Activated naive CD4-positive, alpha-beta T cell treated with anti-CD3 and anti-CD28 coated beads, Interleukin-2, amount 10 ng/mL, durations not matched to agents 7 days and 5 days (primary cell): ENCODE measurements at regions of chr7 and their contacts with region 1.

Region 1: DNA sequence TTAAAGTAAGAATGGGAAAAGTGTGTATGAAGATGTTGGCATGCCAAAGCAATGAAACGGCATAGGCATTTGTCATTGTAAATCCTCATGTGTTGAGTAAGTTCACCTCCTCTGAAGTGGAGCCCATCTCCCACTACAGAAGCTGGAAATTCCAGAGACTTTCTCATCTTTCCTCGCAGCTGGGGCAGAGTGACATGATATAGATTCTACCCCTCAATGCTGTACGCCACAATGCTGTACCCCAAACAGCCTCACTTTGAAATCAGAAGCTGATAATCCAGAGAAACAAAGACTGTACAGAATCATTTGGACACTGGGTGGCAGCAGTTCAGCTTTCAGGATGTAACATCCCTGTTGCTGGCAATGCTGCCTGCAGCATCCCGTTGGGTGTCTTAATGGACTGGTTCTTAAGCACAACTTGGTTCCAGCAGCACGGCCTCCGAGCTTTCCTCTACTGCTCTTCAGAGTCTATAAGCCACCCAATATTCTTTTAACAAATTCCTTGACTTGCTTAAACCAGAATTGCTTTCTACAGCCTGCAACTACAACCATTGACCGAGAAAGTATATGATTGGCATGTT is 18.8 kb downstream of the ZC3HAV1L start:
- DNase-seq: peak; percentile 79
- H3K4me3 Mint-ChIP-seq: no peak overlapping the region
- H3K27ac Mint-ChIP-seq: no peak overlapping the region
- H3K4me1 Mint-ChIP-seq: peaks cover 9% of the 10 kb centered on the region
- H3K27me3 Mint-ChIP-seq: peaks cover 17% of the 10 kb centered on the region

Region 2: GRCh38 chr7:138785587-138786437 is 231.2 kb before region 1 on chr7:
- CTCF ChIA-PET with region 1: no interaction called
- DNase-seq: no peak
- H3K4me3 Mint-ChIP-seq: no peak overlapping the region
- H3K27ac Mint-ChIP-seq: no peak overlapping the region
- H3K4me1 Mint-ChIP-seq: peaks cover 4% of the 10 kb centered on the region
- H3K27me3 Mint-ChIP-seq: peaks cover 21% of the 10 kb centered on the region

Region 3: DNA sequence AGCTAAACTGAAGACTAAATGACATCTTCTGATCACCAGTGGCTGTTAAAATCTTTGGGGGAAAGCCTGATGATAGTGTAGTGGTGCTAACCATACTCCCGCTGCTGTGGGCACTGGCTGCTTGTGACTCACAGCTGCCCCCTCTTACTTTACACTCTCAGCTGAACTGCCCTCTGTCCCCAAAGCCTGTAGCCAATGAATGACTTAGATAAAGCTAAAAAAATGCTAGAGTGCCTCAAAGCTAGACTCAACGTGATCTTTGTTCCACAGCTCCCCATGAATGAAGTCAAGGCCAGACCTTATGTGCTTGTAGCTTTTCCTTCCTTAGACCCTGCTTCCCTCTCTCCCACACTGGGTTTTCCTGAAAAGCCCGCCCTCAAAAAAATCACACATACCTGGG is 12.3 kb after region 1 on chr7:
- CTCF ChIA-PET with region 1: interaction called, 12 read pairs
- DNase-seq: no peak
- H3K4me3 Mint-ChIP-seq: no peak overlapping the region
- H3K27ac Mint-ChIP-seq: peak overlapping the region; percentile 53
- H3K4me1 Mint-ChIP-seq: peaks cover 12% of the 10 kb centered on the region
- H3K27me3 Mint-ChIP-seq: no peaks in the 10 kb centered on the region

Region 4: DNA sequence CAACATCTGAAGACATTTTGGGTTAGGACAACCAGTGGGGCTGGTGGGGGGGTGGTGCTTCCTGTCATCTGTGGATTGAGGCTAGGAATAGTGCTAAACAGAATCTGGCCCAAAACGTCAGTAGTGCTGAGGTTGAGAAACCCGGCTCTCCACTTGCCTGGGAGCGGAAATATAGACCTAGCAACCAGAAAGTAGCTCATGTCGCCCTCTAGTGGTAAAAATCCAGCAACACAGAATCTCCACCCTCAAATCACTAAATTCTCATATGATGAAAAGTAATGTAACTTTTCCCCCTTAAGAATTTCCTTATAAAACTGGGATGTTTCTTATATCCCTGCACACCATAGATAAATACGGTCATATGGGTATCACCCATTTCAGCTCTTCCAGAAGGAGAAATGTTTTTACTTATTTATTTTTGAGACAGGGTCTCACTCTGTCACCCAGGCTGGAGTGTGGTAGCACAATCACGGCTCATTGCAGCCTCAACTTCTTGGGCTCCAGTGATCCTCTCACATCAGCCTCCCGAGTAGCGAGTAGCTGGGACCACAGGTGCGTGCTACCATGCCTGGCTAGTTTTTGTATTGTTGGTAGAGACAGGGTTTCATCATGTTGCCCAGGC is 58.1 kb after region 1 on chr7:
- CTCF ChIA-PET with region 1: interaction called, 14 read pairs
- DNase-seq: peak; percentile 80
- H3K4me3 Mint-ChIP-seq: peak overlapping the region; percentile 13
- H3K27ac Mint-ChIP-seq: peak overlapping the region; percentile 82
- H3K4me1 Mint-ChIP-seq: peaks cover 83% of the 10 kb centered on the region
- H3K27me3 Mint-ChIP-seq: no peaks in the 10 kb centered on the region

Region 5: DNA sequence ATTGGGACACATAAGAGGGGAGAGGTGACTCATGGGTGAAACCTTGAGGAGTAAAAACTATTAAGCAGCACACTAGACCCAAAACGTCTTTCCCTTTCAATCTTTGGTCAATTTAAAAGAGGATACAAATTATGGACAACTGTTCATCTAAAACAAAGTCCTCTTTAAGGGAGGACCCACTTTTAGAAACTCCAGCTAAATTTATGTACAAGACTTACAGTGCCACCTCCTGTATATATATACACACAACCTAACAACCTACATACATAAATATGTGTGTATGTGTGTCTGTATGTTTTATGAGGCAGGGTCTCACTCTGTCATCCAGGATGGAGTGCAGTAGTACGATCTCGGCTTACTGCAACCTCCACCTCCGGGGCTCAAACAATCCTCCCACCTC is 110.6 kb after region 1 on chr7:
- CTCF ChIA-PET with region 1: interaction called, 15 read pairs
- DNase-seq: no peak
- H3K4me3 Mint-ChIP-seq: no peak overlapping the region
- H3K27ac Mint-ChIP-seq: peak overlapping the region; percentile 33
- H3K4me1 Mint-ChIP-seq: peaks cover 40% of the 10 kb centered on the region
- H3K27me3 Mint-ChIP-seq: peaks cover 12% of the 10 kb centered on the region

Region 6: GRCh38 chr7:139192014-139192706 is 175.1 kb after region 1 on chr7:
- CTCF ChIA-PET with region 1: no interaction called
- DNase-seq: no peak
- H3K4me3 Mint-ChIP-seq: no peak overlapping the region
- H3K27ac Mint-ChIP-seq: no peak overlapping the region
- H3K4me1 Mint-ChIP-seq: no peaks in the 10 kb centered on the region
- H3K27me3 Mint-ChIP-seq: no peaks in the 10 kb centered on the region